CD8-positive, alpha-beta memory T cell (primary cell): ENCODE measurements at regions of chr5 and their contacts with region 1.

Region 1: GRCh38 chr5:139745800-139746690 is 49.6 kb upstream of the PSD2 start:
- DNase-seq: peak; percentile 33 to 74 (median 46)
- H3K4me3 ChIP-seq: peak overlapping the region; percentile 70
- H3K4me3 Mint-ChIP-seq: peak overlapping the region; percentile 87 to 91 (median 90)
- H3K27ac ChIP-seq: no peak overlapping the region
- H3K27ac Mint-ChIP-seq: peak overlapping the region; percentile 37 to 99 (median 86)
- H3K4me1 ChIP-seq: peaks cover 24% of the 10 kb centered on the region
- H3K4me1 Mint-ChIP-seq: peaks cover 16 to 34% (median 25%) of the 10 kb centered on the region in 3 donors
- H3K27me3 ChIP-seq: peaks cover 11% of the 10 kb centered on the region
- H3K27me3 Mint-ChIP-seq: no peaks in the 10 kb centered on the region

Region 2: DNA sequence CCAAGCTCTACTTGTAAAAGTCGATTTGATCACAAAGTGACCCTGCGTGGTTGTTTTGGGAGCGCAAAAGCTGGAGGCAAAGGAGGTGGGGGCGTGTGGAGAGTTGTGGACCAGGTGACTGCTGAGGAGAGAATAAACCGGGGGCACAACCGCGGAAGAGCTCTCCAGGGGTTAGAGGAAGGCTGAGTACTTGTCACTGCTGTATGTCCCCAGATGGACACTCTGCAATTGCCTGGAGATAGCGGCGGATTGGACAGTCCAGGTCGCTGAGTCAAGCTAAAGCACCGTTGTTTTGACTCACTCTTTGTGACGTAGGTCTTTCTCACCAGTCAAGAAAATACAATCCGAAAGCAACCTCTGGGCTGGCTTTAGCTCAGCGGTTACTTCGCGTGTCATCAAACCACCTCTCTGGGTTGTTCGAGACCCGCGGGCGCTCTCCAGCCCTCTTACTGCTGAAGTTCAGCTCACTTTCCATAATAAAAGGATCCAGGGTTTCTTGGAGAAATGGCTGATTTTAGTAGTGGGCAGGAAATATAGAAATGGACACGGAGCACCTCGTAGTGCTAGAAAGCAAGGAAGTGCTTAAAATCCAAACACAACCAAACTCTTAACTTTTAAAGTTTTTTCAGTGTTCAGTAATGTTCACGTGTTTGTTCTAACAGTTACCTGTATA is 979.9 kb after region 1 on chr5:
- CTCF ChIA-PET with region 1: no interaction called
- POLR2A ChIA-PET with region 1: interaction called, 10 read pairs
- DNase-seq: peak; percentile 43 to 75 (median 52)
- H3K4me3 ChIP-seq: peak overlapping the region; percentile 20
- H3K4me3 Mint-ChIP-seq: peak overlapping the region; percentile 67 to 83 (median 79)
- H3K27ac ChIP-seq: peak overlapping the region; percentile 61
- H3K27ac Mint-ChIP-seq: peak overlapping the region; percentile 0 to 89 (median 75)
- H3K4me1 ChIP-seq: no peaks in the 10 kb centered on the region
- H3K4me1 Mint-ChIP-seq: peaks cover 13 to 23% (median 21%) of the 10 kb centered on the region in 3 donors
- H3K27me3 ChIP-seq: no peaks in the 10 kb centered on the region
- H3K27me3 Mint-ChIP-seq: peaks cover 7 to 15% of the 10 kb centered on the region in 2 donors